Aorta (tissue), 5 donors: ENCODE measurements at regions of chr9 and their contacts with region 1.

Region 1: GRCh38 chr9:107489687-107490605 is at the start of gene KLF4:
- DNase-seq: peak; percentile 92 to 97
- ATAC-seq: peak; percentile 87
- H3K4me3 ChIP-seq: peak within 1 kb of the TSS; percentile 36 to 41
- H3K27ac ChIP-seq: peak within 1 kb of the TSS; percentile 10 to 80
- H3K4me1 ChIP-seq: no peaks in the 10 kb centered on the region
- H3K27me3 ChIP-seq: no peaks in the 10 kb centered on the region
- total RNA-seq, gene KLF4: 87.8 to 202 TPM

Region 2: DNA sequence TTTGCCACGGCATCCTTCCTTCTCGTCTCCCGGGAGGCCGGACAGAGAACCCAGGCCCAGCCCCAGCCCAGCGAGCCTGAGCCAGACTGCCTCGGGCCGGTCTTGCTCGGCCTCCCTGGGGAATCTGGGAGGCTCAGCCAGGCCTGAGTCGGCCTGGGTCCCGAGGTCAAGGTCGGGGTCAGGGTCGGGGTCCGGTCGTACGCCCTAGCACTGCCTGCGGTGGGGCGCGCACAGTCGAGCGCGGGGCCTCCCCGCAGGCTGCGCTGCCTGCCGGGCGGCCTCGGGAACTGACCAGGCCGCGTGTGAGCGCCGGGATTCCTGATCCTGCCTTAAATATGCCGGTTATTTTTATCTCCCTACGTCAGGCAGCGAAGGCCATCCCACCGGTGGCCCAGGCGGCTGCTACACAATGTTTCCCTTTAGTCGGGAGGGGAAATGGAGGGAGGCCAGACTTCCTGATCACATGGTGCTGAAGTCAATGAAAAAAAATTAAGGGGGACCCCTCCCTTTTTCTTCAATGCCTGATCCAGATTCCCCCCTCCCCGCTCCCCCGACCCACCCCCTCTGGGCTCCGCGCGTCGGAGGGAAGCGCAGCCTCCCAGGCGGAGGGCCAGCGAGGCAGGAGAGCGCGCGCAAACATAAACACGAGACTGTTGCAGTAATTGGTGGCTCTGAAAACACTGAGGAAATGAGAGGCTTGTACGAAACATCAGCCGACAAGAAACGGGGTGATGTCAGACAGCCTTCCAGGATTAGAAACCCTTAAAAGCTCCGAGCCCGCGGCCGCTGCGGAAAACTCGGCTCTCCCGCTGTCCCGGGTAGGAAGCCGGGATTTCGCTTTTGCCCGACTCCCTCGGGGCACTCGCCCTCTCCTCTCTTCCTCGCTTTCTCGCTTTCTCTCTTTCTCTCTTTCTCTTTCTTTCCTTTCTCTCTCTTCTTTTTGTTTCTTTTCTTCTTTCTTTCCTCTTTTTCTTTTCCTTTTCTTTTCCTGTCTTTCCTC is 147.8 kb after region 1 on chr9:
- intact Hi-C with region 1: loop called (anchors 1 to 2 kb)
- DNase-seq: peak; percentile 95 to 96
- ATAC-seq: peak; percentile 95
- H3K4me3 ChIP-seq: peak overlapping the region; percentile 6 to 47
- H3K27ac ChIP-seq: peak overlapping the region; percentile 95 to 98
- H3K4me1 ChIP-seq: no peaks in the 10 kb centered on the region
- H3K27me3 ChIP-seq: no peaks in the 10 kb centered on the region

Region 3: GRCh38 chr9:107749787-107750444 is 260.0 kb after region 1 on chr9:
- intact Hi-C with region 1: loop called (anchors 1 to 5 kb)
- DNase-seq: peak; percentile 93 to 95
- ATAC-seq: peak; percentile 94
- H3K4me3 ChIP-seq: no peak overlapping the region
- H3K27ac ChIP-seq: peak overlapping the region; percentile 96 to 98
- H3K4me1 ChIP-seq: peaks cover 4 to 8% of the 10 kb centered on the region in 2 donors
- H3K27me3 ChIP-seq: no peaks in the 10 kb centered on the region

Region 4: DNA sequence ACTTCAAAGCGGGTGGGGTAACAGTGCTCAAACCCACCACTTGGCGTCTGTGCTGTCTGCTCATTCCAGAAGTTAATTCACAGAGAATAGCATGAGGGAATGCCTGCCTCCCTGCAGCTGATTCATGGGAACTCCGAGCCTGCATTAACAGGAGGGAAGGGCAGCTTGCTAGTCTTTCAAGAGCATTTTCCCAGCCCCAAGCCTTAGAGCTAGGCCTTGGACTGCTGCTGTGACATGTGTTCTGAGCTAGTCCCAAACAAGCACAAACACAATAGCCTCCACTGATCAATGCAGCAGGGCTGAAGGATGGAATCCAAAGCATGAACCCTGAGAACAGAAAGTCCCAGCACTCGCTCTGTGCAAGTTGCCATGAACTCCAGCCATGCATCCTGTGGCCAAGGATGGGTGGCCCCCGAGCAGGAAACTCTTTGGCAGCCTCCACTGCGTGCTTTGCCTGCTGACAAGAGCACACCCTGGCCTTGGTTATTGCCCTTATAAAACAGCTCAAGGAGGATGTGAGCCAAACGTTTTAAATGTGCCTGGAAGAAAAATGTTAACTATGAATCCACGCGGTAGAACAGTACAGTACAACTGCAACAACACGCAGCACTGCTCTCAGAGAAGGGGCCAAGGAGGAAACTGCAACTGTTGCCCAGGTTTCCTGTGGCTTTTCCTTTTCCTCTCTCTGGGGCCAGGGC is 652.7 kb after region 1 on chr9:
- intact Hi-C with region 1: loop called in 1 of 2 experiments (anchors 5 kb)
- DNase-seq: peak; percentile 86 to 89
- ATAC-seq: peak; percentile 95
- H3K4me3 ChIP-seq: no peak overlapping the region
- H3K27ac ChIP-seq: peak overlapping the region in 1 of 2 donors; percentile 96
- H3K4me1 ChIP-seq: peaks cover 0 to 9% of the 10 kb centered on the region in 2 donors
- H3K27me3 ChIP-seq: no peaks in the 10 kb centered on the region

Region 5: GRCh38 chr9:108272349-108272899 is 782.5 kb after region 1 on chr9:
- intact Hi-C with region 1: loop called in 1 of 2 experiments (anchors 5 kb)
- DNase-seq: peak in 1 of 2 donors; percentile 65
- ATAC-seq: peak; percentile 82
- H3K4me3 ChIP-seq: no peak overlapping the region
- H3K27ac ChIP-seq: no peak overlapping the region
- H3K4me1 ChIP-seq: no peaks in the 10 kb centered on the region
- H3K27me3 ChIP-seq: no peaks in the 10 kb centered on the region

Region 6: GRCh38 chr9:108565651-108566378 is 1075.9 kb after region 1 on chr9:
- intact Hi-C with region 1: loop called in 1 of 2 experiments (anchors 5 kb)
- DNase-seq: peak in 1 of 2 donors; percentile 53
- ATAC-seq: peak; percentile 89
- H3K4me3 ChIP-seq: no peak overlapping the region
- H3K27ac ChIP-seq: no peak overlapping the region
- H3K4me1 ChIP-seq: no peaks in the 10 kb centered on the region
- H3K27me3 ChIP-seq: no peaks in the 10 kb centered on the region